Activated T-helper 2 cell treated with anti-CD3 and anti-CD28 coated beads, Interferon-gamma antibody, Interleukin-2, Interleukin-4, amounts not matched to agents 10 μg/mL and 5 μg/mL and 100 μg/mL, durations not matched to agents 14 hours and 24 hours and 36 hours (primary cell): ENCODE measurements at regions of chr4 and their contacts with region 1.

Region 1: GRCh38 chr4:69167300-69167699 is 47.2 kb downstream of the UGT2B11 start:
- DNase-seq: no peak
- H3K4me3 Mint-ChIP-seq: no peak overlapping the region
- H3K27ac Mint-ChIP-seq: no peak overlapping the region
- H3K4me1 Mint-ChIP-seq: no peaks in the 10 kb centered on the region
- H3K27me3 Mint-ChIP-seq: no peaks in the 10 kb centered on the region

Region 2: GRCh38 chr4:68271851-68272756 is 895.2 kb before region 1 on chr4:
- intact Hi-C with region 1: loop called (anchors 10 kb)
- DNase-seq: no peak
- H3K4me3 Mint-ChIP-seq: peak overlapping the region; percentile 33
- H3K27ac Mint-ChIP-seq: no peak overlapping the region
- H3K4me1 Mint-ChIP-seq: peaks cover 12% of the 10 kb centered on the region
- H3K27me3 Mint-ChIP-seq: no peaks in the 10 kb centered on the region